A673 (cell line): ENCODE measurements at regions of chr1 and their contacts with region 1.

Region 1: GRCh38 chr1:171188388-171189266 is 3.5 kb downstream of the FMO2 start:
- DNase-seq: peak; percentile 83
- H3K4me3 ChIP-seq: no peak overlapping the region
- H3K27ac ChIP-seq: no peak overlapping the region
- H3K4me1 ChIP-seq: peaks cover 8% of the 10 kb centered on the region
- H3K27me3 ChIP-seq: no peaks in the 10 kb centered on the region
- CTCF ChIP-seq: peak; percentile 97

Region 2: DNA sequence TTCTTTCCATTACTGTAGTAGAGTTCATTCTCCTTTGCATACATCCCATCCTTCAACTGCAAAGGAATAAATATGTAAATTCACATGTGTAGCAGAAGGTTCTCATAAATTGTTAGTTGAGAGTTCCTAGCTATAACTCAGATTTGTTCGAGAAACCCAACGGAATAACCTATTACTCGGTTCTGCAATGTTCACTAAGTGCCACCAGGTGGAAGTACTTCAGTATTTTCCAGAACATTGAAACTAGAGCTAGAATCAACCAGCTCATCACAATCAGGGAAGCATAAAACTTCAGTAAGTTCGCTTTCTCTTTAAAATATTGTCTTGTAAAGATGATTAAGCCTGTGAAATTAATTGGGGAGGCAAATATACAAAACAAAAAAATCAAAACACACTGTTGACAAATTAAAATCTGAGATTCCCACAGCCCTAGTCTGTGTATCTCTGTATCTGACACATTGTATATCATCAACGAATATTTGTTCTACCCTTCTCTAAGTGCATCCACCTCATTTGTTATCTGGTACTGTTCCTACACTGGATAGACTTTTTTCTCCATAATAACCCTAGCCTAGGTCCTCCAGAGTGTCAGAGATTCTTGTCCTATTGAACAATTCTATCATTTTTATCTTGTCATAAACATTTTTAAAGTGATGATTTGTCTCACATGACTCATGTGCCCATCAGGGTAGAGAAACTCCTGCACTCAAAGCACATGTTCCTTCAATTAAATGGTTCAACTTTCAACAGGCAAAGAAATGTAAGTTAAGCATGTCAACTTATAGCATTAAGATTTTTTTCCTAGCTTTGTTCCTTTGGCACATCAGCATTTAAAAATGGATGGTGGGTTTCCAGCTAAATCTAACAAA is 221.4 kb before region 1 on chr1:
- CTCF ChIA-PET with region 1: no interaction called
- POLR2A ChIA-PET with region 1: no interaction called
- intact Hi-C with region 1: loop called (anchors 5 kb)
- DNase-seq: peak; percentile 59
- H3K4me3 ChIP-seq: no peak overlapping the region
- H3K27ac ChIP-seq: no peak overlapping the region
- H3K4me1 ChIP-seq: no peaks in the 10 kb centered on the region
- H3K27me3 ChIP-seq: no peaks in the 10 kb centered on the region
- CTCF ChIP-seq: peak; percentile 71

Region 3: DNA sequence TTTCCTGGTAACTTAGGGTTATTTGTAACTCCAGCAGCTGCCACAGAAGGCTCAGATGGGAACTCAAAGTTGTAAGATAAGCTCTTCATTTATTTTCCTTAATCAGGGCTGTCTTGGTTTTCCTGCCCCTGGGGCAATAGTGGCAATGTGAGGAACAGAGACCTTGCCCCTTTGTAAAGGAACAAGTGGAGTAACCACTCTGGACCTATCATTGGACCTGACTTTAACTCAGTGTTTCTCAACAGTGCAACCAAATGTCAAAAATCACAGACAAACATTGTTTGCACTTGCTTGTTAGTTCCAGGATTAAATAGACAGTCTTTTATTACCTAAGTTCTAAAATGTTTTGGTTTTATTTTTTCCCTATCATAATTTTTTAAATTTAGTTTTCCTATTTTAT is 100.7 kb before region 1 on chr1:
- CTCF ChIA-PET with region 1: interaction called, 10 read pairs
- POLR2A ChIA-PET with region 1: no interaction called
- intact Hi-C with region 1: no loop called
- DNase-seq: no peak
- H3K4me3 ChIP-seq: no peak overlapping the region
- H3K27ac ChIP-seq: no peak overlapping the region
- H3K4me1 ChIP-seq: no peaks in the 10 kb centered on the region
- H3K27me3 ChIP-seq: no peaks in the 10 kb centered on the region
- CTCF ChIP-seq: no peak

Region 4: GRCh38 chr1:171166361-171166760 is 22.3 kb before region 1 on chr1:
- CTCF ChIA-PET with region 1: no interaction called
- POLR2A ChIA-PET with region 1: no interaction called
- intact Hi-C with region 1: no loop called
- DNase-seq: no peak
- H3K4me3 ChIP-seq: no peak overlapping the region
- H3K27ac ChIP-seq: no peak overlapping the region
- H3K4me1 ChIP-seq: no peaks in the 10 kb centered on the region
- H3K27me3 ChIP-seq: no peaks in the 10 kb centered on the region
- CTCF ChIP-seq: no peak

Region 5: DNA sequence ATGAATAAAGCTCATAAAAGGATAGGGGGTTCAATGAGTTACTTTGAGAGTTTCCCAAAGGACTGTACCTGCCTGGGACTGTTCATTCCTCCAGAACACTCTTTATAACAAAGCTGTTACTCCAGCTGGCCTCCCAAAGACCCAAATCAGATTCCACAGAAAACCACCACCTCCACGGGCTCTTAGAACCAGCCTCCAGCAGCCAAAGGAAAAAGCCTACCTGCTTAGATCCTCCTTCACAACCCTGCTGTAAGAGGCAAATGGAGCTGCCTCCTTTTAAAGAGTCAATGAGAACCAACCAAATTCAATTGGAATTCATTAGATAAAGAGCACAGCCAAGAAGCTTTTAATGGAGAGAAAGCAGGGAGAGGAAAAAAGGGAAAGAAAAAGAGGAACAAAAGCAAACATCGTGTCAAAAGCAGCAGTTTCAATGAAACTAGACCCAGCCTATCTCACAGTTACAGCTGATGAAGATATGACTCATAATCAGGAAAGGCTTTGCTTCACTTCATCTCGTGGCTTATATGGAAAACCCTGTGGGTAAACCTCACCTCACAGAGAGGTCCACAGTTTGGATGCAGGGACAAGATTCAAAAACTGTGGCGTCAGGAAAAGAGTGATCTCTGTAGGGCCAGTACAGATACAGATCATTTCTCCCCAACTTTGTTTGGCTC is 97.5 kb after region 1 on chr1:
- CTCF ChIA-PET with region 1: no interaction called
- POLR2A ChIA-PET with region 1: no interaction called
- intact Hi-C with region 1: no loop called
- DNase-seq: no peak
- H3K4me3 ChIP-seq: no peak overlapping the region
- H3K27ac ChIP-seq: no peak overlapping the region
- H3K4me1 ChIP-seq: no peaks in the 10 kb centered on the region
- H3K27me3 ChIP-seq: no peaks in the 10 kb centered on the region
- CTCF ChIP-seq: no peak

Region 6: GRCh38 chr1:171583581-171584201 is 395.1 kb after region 1 on chr1:
- CTCF ChIA-PET with region 1: no interaction called
- POLR2A ChIA-PET with region 1: no interaction called
- intact Hi-C with region 1: no loop called
- DNase-seq: no peak
- H3K4me3 ChIP-seq: no peak overlapping the region
- H3K27ac ChIP-seq: no peak overlapping the region
- H3K4me1 ChIP-seq: no peaks in the 10 kb centered on the region
- H3K27me3 ChIP-seq: no peaks in the 10 kb centered on the region
- CTCF ChIP-seq: no peak